Activated naive CD4-positive, alpha-beta T cell treated with anti-CD3 and anti-CD28 coated beads for 36 hours (primary cell): ENCODE measurements at regions of chr1 and their contacts with region 1.

Region 1: GRCh38 chr1:56709269-56709880 is 64.3 kb downstream of the PRKAA2 start:
- DNase-seq: no peak
- H3K4me3 Mint-ChIP-seq: no peak overlapping the region
- H3K27ac Mint-ChIP-seq: no peak overlapping the region
- H3K4me1 Mint-ChIP-seq: no peaks in the 10 kb centered on the region
- H3K27me3 Mint-ChIP-seq: peaks cover 19% of the 10 kb centered on the region

Region 2: GRCh38 chr1:55284852-55285251 is 1424.5 kb before region 1 on chr1:
- CTCF ChIA-PET with region 1: no interaction called
- intact Hi-C with region 1: loop called (anchors 2 kb)
- DNase-seq: peak; percentile 52
- H3K4me3 Mint-ChIP-seq: no peak overlapping the region
- H3K27ac Mint-ChIP-seq: no peak overlapping the region
- H3K4me1 Mint-ChIP-seq: peaks cover 25% of the 10 kb centered on the region
- H3K27me3 Mint-ChIP-seq: peaks cover 2% of the 10 kb centered on the region

Region 3: DNA sequence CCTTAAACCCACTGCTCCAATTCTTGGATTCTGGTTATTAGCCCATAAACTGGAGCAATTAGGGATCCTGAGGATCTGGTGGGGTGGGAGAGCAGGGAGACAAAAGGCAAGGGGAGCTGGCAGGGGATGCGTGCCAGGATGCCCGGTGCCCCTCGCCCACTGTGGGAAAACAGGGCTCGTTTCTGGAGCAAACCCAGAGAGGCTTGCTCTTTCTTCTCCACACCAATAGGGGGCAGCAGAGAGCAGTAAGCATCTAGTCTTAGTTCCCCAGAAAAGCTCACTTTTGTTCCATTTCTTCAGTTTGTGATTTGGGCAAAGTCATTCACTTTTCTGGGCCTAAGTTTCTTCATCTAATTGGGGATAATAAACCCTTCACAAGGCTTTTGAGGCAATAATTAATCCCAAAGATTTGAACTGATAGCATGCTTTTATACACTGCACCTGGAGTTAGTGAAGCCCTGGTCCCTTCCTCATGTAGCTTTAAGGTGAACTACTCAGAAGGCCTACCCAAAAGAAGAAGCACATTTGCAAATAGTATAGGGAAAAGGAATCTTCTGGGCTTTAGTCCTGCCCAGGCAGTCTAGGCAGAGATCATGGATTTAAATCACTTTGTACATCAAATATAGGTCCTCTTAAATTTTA is 1333.6 kb before region 1 on chr1:
- CTCF ChIA-PET with region 1: no interaction called
- intact Hi-C with region 1: loop called (anchors 5 kb)
- DNase-seq: peak; percentile 56
- H3K4me3 Mint-ChIP-seq: no peak overlapping the region
- H3K27ac Mint-ChIP-seq: no peak overlapping the region
- H3K4me1 Mint-ChIP-seq: peaks cover 3% of the 10 kb centered on the region
- H3K27me3 Mint-ChIP-seq: no peaks in the 10 kb centered on the region

Region 4: DNA sequence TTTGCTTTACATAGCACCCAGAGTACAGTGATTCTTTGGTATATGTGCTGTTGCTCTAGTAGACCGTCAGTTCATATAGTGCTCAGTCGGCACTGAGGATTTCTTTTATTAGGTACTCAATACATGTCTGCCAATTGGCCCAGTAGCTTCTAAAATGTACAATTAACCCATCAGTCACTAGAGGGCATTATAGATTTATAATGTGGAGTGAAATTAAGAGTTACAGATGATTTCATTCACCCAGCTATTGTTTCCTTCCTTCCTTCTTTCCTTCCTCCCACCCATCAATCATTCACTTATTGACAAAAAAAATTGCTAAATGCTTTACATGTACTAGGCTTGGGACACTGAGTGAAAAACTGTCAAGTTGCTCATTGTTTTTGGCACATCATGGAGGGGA is 1230.6 kb before region 1 on chr1:
- CTCF ChIA-PET with region 1: no interaction called
- intact Hi-C with region 1: loop called (anchors 1 kb)
- DNase-seq: no peak
- H3K4me3 Mint-ChIP-seq: no peak overlapping the region
- H3K27ac Mint-ChIP-seq: no peak overlapping the region
- H3K4me1 Mint-ChIP-seq: no peaks in the 10 kb centered on the region
- H3K27me3 Mint-ChIP-seq: peaks cover 21% of the 10 kb centered on the region